Dendritic cell treated with granulocyte-macrophage colony-stimulating factor and Interleukin-4, amounts not matched to agents 40 ng/mL and 50 ng/mL, for 4 days (primary cell): ENCODE measurements at regions of chr9 and their contacts with region 1.

Region 1: DNA sequence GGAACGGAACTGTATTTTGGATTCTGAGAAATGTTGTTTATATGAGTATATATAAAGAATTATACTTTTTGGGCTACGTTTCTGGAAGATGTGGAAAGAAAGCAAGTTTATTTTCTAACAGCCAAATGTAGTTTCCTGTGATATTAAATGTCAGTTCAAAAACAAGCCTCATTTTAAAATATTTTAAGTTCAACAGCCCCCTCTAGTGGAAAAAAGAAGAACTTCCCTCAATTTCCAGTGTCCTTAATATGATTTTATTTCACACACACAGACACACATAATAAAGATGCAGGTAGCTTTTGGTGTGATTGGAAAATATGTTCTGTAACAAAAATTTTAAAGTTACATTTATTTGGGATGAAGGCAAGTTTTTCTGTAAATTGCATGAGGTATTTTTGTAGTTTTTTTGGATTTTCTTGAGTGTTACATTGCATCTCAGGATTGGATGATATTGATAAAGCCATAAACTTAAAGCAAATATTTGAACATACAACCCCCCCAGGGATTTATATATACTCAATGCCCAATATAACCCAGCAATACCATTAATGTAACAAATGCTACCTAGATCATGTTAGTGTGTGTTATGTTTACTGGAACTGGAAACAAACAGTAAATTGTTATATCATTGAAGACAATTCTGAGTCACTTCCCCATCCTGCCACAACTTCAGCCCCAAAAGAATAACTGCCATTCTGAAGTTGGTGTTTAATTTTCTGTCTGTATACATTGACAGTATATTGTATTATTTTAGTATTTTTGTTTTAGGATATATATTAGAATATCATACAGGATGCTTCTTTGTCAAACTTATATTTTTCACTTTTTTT is 54.0 kb downstream of the CCDC171 start:
- H3K4me3 Mint-ChIP-seq: no peak overlapping the region
- H3K27ac Mint-ChIP-seq: no peak overlapping the region
- H3K4me1 Mint-ChIP-seq: no peaks in the 10 kb centered on the region
- H3K27me3 Mint-ChIP-seq: no peaks in the 10 kb centered on the region

Region 2: DNA sequence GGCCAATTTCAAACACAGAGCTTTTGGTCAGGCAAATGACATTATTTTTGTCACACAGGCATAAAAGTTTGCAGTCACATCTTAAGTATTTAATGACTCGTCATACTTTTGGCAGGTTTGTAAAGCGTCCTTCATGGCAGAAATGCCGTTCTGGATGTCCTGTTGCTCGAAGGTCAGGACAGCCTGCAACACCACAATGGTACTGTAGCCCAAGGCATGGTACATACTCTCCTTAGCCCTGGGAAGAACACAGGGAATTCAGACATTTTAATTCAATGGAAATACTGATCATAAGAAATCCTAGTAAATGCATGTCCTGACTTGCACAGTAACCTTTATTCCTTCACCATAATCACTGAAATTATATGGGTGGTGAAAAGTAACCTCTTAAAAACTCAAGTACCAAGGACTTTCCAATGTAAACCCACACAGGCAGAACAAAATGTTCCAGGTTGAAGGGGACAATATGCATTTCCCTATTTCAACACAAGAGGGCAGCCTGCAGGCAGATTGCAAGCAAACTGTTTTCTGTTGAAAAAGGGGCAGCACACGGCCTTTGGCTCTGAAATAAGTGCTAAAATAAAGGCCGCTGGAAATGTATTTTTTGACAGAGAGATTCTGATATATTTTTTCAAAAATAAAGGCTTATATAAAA is 395.6 kb before region 1 on chr9:
- intact Hi-C with region 1: loop called (anchors 1 kb)
- H3K4me3 Mint-ChIP-seq: no peak overlapping the region
- H3K27ac Mint-ChIP-seq: no peak overlapping the region
- H3K4me1 Mint-ChIP-seq: no peaks in the 10 kb centered on the region
- H3K27me3 Mint-ChIP-seq: no peaks in the 10 kb centered on the region

Region 3: GRCh38 chr9:15277400-15278090 is 329.3 kb before region 1 on chr9:
- intact Hi-C with region 1: loop called (anchors 2 kb)
- H3K4me3 Mint-ChIP-seq: no peak overlapping the region
- H3K27ac Mint-ChIP-seq: no peak overlapping the region
- H3K4me1 Mint-ChIP-seq: no peaks in the 10 kb centered on the region
- H3K27me3 Mint-ChIP-seq: no peaks in the 10 kb centered on the region

Region 4: GRCh38 chr9:15469406-15469805 is 137.5 kb before region 1 on chr9:
- intact Hi-C with region 1: loop called (anchors 10 kb)
- H3K4me3 Mint-ChIP-seq: no peak overlapping the region
- H3K27ac Mint-ChIP-seq: no peak overlapping the region
- H3K4me1 Mint-ChIP-seq: no peaks in the 10 kb centered on the region
- H3K27me3 Mint-ChIP-seq: no peaks in the 10 kb centered on the region

Region 5: DNA sequence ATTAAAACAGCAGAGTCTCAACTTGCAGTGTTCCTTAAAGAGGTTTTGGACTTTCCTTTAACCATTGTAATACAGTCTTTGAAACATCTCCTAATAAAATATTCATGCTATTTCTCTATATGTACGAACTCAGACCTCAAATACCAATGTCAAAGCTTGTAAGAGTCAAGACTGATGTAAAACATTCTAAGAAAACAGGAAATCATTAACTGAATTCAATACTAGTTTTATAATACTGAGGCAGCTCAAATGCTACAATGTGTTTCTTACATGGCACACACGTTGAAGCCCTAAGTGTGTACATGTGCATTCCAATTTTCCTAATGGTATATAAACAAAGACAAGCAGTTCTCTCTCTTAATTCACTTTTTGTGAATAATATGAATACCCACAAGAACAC is 107.7 kb before region 1 on chr9:
- intact Hi-C with region 1: loop called (anchors 5 kb)
- H3K4me3 Mint-ChIP-seq: no peak overlapping the region
- H3K27ac Mint-ChIP-seq: no peak overlapping the region
- H3K4me1 Mint-ChIP-seq: no peaks in the 10 kb centered on the region
- H3K27me3 Mint-ChIP-seq: no peaks in the 10 kb centered on the region